PC-3 (cell line): ENCODE measurements at regions of chr17 and their contacts with region 1.

Region 1: DNA sequence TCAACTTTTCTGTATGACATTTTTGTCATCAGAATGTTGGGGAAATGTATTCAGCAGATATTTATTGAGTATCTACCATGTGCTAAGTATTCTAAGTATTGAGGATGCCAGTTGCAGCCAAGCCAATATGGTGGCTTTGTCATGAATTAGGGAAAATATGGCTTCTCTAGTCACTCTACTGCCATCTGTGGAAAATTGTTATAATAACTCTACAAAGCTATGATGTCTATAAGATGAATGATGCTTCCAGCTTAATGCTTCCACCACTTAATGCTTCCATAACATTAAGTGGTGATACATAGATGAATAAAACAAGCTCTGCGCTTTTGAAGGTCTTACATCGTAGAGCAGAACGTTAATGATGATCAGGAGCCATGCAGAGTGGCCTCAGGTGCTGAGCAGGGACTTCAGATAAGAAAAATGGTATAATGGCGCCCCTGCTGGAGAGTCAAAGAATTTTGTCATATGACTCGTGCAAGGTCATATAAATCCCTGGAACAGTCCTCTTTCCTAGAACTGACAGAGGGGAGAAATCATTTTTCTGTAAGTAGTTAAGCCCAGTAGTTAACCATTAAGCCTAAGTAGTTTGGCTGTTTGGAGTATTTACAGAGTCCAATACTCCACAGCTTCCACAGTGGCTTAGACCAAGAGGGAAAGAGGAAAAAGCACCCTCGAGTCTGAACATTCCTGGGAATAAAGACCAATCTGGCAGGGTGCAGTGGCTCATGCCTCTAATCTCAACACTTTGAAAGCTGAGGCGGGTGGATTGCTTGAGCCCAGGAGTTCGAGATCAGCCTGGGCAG is 2.7 kb upstream of the TMIGD1 start:
- DNase-seq: peak; percentile 68
- ATAC-seq: peak; percentile 35
- H3K4me3 ChIP-seq: no peak overlapping the region
- H3K27ac ChIP-seq: no peak overlapping the region
- H3K4me1 ChIP-seq: peaks cover 16% of the 10 kb centered on the region
- H3K27me3 ChIP-seq: no peaks in the 10 kb centered on the region
- CTCF ChIP-seq: peak; percentile 90

Region 2: GRCh38 chr17:30104575-30105339 is 231.8 kb before region 1 on chr17:
- CTCF ChIA-PET with region 1: interaction called, 6 read pairs
- POLR2A ChIA-PET with region 1: no interaction called
- intact Hi-C with region 1: loop called (anchors 1 kb)
- DNase-seq: peak; percentile 72
- ATAC-seq: peak; percentile 93
- H3K4me3 ChIP-seq: peak overlapping the region; percentile 63
- H3K27ac ChIP-seq: no peak overlapping the region
- H3K4me1 ChIP-seq: 0 out of 2 replicates have a peak, but pooled peaks cover 4% of the 10 kb centered on the region
- H3K27me3 ChIP-seq: no peaks in the 10 kb centered on the region
- CTCF ChIP-seq: peak; percentile 83

Region 3: DNA sequence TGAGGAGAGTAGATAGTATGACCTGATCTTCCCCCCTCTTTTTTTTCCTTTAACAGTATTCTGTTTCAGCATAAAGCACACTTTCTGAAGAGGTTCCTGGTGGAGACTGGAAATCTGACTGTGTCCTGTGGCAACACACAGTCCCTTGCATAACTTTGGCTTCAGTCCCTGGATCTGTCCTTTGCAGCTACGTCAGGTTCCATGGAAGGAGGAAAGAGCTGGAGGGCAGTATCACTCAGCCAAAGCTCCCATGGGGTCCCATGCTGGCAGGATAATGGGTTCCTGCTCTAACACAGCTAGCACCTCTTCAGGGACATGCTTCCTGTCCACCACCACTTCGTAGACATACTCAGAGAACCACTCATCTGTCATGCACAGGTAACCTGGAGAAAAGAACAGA is 87.8 kb before region 1 on chr17:
- CTCF ChIA-PET with region 1: no interaction called
- POLR2A ChIA-PET with region 1: no interaction called
- intact Hi-C with region 1: no loop called
- DNase-seq: no peak
- ATAC-seq: no peak
- H3K4me3 ChIP-seq: no peak overlapping the region
- H3K27ac ChIP-seq: no peak overlapping the region
- H3K4me1 ChIP-seq: no peaks in the 10 kb centered on the region
- H3K27me3 ChIP-seq: no peaks in the 10 kb centered on the region
- CTCF ChIP-seq: no peak

Region 4: GRCh38 chr17:30299000-30299399 is 37.6 kb before region 1 on chr17:
- CTCF ChIA-PET with region 1: interaction called, 6 read pairs
- POLR2A ChIA-PET with region 1: no interaction called
- intact Hi-C with region 1: loop called (anchors 1 kb)
- DNase-seq: peak; percentile 39
- ATAC-seq: no peak
- H3K4me3 ChIP-seq: no peak overlapping the region
- H3K27ac ChIP-seq: no peak overlapping the region
- H3K4me1 ChIP-seq: no peaks in the 10 kb centered on the region
- H3K27me3 ChIP-seq: no peaks in the 10 kb centered on the region
- CTCF ChIP-seq: peak; percentile 62

Region 5: GRCh38 chr17:30369995-30370394 is 33.4 kb after region 1 on chr17:
- CTCF ChIA-PET with region 1: no interaction called
- POLR2A ChIA-PET with region 1: no interaction called
- intact Hi-C with region 1: loop called (anchors 2 kb)
- DNase-seq: peak; percentile 86
- ATAC-seq: peak; percentile 87
- H3K4me3 ChIP-seq: no peak overlapping the region
- H3K27ac ChIP-seq: peak overlapping the region; percentile 90
- H3K4me1 ChIP-seq: peaks cover 37% of the 10 kb centered on the region
- H3K27me3 ChIP-seq: no peaks in the 10 kb centered on the region
- CTCF ChIP-seq: no peak

Region 6: GRCh38 chr17:30376621-30377452 is 40.3 kb after region 1 on chr17:
- CTCF ChIA-PET with region 1: no interaction called
- POLR2A ChIA-PET with region 1: no interaction called
- intact Hi-C with region 1: loop called (anchors 1 kb)
- DNase-seq: peak; percentile 55
- ATAC-seq: peak; percentile 21
- H3K4me3 ChIP-seq: no peak overlapping the region
- H3K27ac ChIP-seq: peak overlapping the region; percentile 12
- H3K4me1 ChIP-seq: peaks cover 40% of the 10 kb centered on the region
- H3K27me3 ChIP-seq: no peaks in the 10 kb centered on the region
- CTCF ChIP-seq: no peak

Region 7: GRCh38 chr17:30477083-30477773 is 140.7 kb after region 1 on chr17 and contains the start of gene GOSR1:
- CTCF ChIA-PET with region 1: no interaction called
- POLR2A ChIA-PET with region 1: no interaction called
- intact Hi-C with region 1: loop called (anchors 1 kb)
- DNase-seq: peak; percentile 90
- ATAC-seq: peak; percentile 100
- H3K4me3 ChIP-seq: peak within 1 kb of the TSS; percentile 97
- H3K27ac ChIP-seq: peak within 1 kb of the TSS; percentile 63
- H3K4me1 ChIP-seq: peaks cover 8% of the 10 kb centered on the region; the same call in 1 of the 2 replicates
- H3K27me3 ChIP-seq: no peaks in the 10 kb centered on the region
- CTCF ChIP-seq: peak; percentile 65
- total RNA-seq, gene GOSR1: 14.2 and 22.2 TPM in 2 replicates

Region 8: GRCh38 chr17:31321481-31321880 is 984.9 kb after region 1 on chr17 and contains the start of gene EVI2A:
- CTCF ChIA-PET with region 1: no interaction called
- POLR2A ChIA-PET with region 1: no interaction called
- intact Hi-C with region 1: no loop called
- DNase-seq: peak; percentile 69
- ATAC-seq: peak; percentile 72
- H3K4me3 ChIP-seq: no peak within 1 kb of the TSS
- H3K27ac ChIP-seq: peak within 1 kb of the TSS; percentile 59
- H3K4me1 ChIP-seq: peaks cover 18% of the 10 kb centered on the region
- H3K27me3 ChIP-seq: no peaks in the 10 kb centered on the region
- CTCF ChIP-seq: no peak
- total RNA-seq, gene EVI2A: 0.92 TPM in 1 of 2 replicates, not detected in the other